ENCODE measurements at regions of chr3 and their contacts with region 1.

Region 1: GRCh38 chr3:128369864-128370642 is 96.6 kb downstream of the DNAJB8 start:
- DNase-seq: no peak
- ATAC-seq: peak; percentile 28 to 38
- H3K4me3 ChIP-seq: no peak overlapping the region
- H3K27ac ChIP-seq: peak overlapping the region; percentile 65 to 85 (median 74)
- H3K4me1 ChIP-seq: peaks cover 80 to 87% of the 10 kb centered on the region in 2 donors
- H3K27me3 ChIP-seq: no peaks in the 10 kb centered on the region
- CTCF ChIP-seq: no peak
- POLR2A ChIP-seq: no peak

Region 2: DNA sequence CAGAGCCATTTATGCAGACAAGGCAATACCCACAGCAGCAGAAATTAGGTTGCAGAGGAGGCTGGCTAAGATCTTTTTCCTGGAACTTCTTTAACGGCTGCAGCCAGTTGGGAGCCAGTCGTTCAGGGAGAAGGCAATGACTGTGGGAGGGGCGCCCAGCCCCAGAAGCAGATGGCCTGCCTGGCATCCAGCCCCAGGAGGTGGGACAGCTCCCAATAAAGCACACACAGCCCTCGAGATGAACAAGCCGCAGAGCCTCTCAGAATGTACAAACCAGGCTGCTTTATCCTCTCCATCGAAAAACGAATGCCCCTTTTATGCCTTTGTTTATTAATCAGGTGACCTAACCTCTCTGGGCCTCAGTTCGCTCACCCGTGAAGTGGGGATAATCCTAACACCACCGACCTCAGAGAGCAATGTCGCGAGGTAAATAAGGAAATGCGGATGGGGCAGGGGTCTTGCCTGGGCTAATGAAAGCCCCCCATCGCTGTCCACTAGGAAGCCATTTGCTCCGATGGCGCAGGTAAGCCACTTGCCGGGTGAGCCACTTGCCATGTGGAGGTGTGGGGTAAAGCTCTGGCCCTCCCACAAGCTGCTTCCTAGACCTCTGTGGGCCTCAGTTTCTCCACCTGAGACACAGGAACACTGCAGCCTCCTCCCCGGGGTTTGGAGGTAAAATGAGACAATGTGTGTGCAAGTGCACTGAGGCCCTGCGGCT is 583.5 kb before region 1 on chr3:
- in situ Hi-C with region 1: no loop called
- intact Hi-C with region 1: loop called (anchors 10 kb)
- DNase-seq: peak; percentile 76 to 87
- ATAC-seq: peak; percentile 37 to 57
- H3K4me3 ChIP-seq: peak overlapping the region; percentile 23 to 38 (median 30)
- H3K27ac ChIP-seq: peak overlapping the region; percentile 84 to 92 (median 90)
- H3K4me1 ChIP-seq: peaks cover 77 to 96% of the 10 kb centered on the region in 2 donors
- H3K27me3 ChIP-seq: no peaks in the 10 kb centered on the region
- CTCF ChIP-seq: no peak
- POLR2A ChIP-seq: peak in 1 of 2 donors; percentile 10